Psoas muscle (tissue), 8 donors: ENCODE measurements at regions of chr2 and their contacts with region 1.

Region 1: DNA sequence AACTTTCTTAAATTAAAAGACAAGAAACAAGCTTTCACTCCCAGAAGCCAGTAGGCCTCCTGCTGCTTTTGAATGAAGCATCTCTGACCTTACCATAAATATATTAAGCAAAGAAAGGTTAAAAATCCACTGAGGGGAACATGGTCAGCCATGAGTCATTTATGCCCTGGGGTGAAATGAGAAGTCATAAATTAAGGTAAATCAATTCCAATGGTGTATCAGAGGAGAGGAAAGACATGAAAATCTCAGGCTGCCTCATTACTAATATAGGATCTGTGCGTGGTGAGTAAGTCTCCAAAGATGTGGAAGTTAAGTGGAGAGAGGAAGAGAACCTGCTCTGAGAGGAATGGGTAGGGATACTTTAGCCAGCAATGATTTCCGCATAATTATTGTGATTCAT is 292.3 kb upstream of the CHAC2 start:
- DNase-seq: no peak
- ATAC-seq: no peak
- H3K4me3 ChIP-seq: no peak overlapping the region
- H3K27ac ChIP-seq: no peak overlapping the region
- H3K4me1 ChIP-seq: no peaks in the 10 kb centered on the region
- H3K27me3 ChIP-seq: no peaks in the 10 kb centered on the region
- CTCF ChIP-seq: no peak

Region 2: GRCh38 chr2:53422979-53423378 is 52.3 kb before region 1 on chr2:
- intact Hi-C with region 1: loop called in 1 of 2 experiments (anchors 5 kb)
- DNase-seq: no peak
- ATAC-seq: peak in 3 of 4 donors; percentile 49 to 64 (median 64)
- H3K4me3 ChIP-seq: no peak overlapping the region
- H3K27ac ChIP-seq: no peak overlapping the region
- H3K4me1 ChIP-seq: no peaks in the 10 kb centered on the region
- H3K27me3 ChIP-seq: no peaks in the 10 kb centered on the region
- CTCF ChIP-seq: peak; percentile 24